Activated CD8-positive, alpha-beta memory T cell treated with anti-CD3 and anti-CD28 coated beads, Interleukin-2, amount 10 ng/mL, durations not matched to agents 7 days and 5 days (primary cell): ENCODE measurements at regions of chr12 and their contacts with region 1.

Region 1: DNA sequence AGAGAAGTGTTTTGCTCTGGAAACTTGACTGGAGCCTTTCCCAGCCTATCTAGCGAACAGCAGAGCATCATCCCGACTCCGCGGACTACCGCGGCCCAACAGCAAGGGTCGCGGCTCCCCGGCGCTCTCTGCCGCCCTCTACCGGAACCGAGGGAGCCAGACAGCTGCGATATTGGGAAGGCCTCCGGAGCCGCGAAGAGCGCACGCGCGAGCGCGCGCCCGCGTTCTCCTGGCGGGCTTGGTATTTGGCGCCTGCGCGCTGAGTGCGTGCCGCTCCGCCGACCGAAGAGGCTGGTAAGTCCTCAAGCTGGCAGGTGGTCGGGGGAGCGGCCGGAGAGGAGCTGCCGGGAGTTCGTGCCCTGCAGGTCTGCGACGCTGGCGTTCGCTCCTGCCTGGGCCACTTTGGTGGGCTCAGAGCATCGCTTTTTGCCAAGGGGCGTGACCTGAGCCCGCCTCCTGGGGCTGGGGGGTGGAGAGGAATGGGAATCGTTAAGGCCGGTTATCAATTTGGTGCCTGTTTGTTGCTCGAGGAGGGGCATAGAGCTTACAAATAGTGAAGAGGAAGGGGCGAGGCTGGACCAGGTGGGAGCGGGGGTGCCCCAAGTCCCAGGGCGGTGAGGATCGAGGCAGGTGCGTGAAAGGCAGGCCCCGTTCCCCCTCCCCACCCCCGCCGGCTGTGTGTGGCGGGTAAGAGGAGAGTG is at the start of gene TMEM106C:
- DNase-seq: peak; percentile 93
- ATAC-seq: peak; percentile 97
- H3K4me3 Mint-ChIP-seq: peak within 1 kb of the TSS; percentile 94
- H3K27ac Mint-ChIP-seq: peak within 1 kb of the TSS; percentile 83
- H3K4me1 Mint-ChIP-seq: peaks cover 33% of the 10 kb centered on the region
- H3K27me3 Mint-ChIP-seq: peaks cover 38% of the 10 kb centered on the region
- total RNA-seq, gene TMEM106C: 162 to 174 TPM

Region 2: DNA sequence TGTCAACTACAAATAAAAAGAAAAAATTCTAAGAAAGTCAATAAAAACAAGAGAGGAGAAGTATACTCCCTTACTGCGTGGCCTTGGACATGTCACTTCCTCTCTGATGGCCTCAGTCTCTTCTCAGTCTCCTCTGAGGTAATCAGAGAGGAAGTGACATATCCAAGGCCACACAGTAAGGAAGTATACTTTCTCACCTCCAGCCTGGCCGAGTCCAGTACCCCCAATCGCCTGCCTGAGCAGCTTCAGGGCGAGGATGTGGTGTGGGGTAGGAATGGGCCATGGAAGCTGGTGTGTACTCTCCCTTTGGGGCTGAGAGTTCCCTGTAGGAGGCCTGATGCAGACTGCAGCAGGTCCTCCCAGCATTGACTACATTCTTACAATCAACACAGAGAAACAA is 74.5 kb before region 1 on chr12:
- CTCF ChIA-PET with region 1: interaction called, 14 read pairs
- DNase-seq: peak; percentile 80
- ATAC-seq: peak; percentile 86
- H3K4me3 Mint-ChIP-seq: peak overlapping the region; percentile 76
- H3K27ac Mint-ChIP-seq: peak overlapping the region; percentile 97
- H3K4me1 Mint-ChIP-seq: peaks cover 91% of the 10 kb centered on the region
- H3K27me3 Mint-ChIP-seq: no peaks in the 10 kb centered on the region

Region 3: GRCh38 chr12:47910486-47910885 is 53.0 kb before region 1 on chr12:
- CTCF ChIA-PET with region 1: interaction called, 30 read pairs
- DNase-seq: no peak
- ATAC-seq: no peak
- H3K4me3 Mint-ChIP-seq: no peak overlapping the region
- H3K27ac Mint-ChIP-seq: no peak overlapping the region
- H3K4me1 Mint-ChIP-seq: peaks cover 2% of the 10 kb centered on the region
- H3K27me3 Mint-ChIP-seq: peaks cover 59% of the 10 kb centered on the region

Region 4: GRCh38 chr12:47977046-47977766 is 13.7 kb after region 1 on chr12:
- CTCF ChIA-PET with region 1: interaction called, 29 read pairs
- DNase-seq: no peak
- ATAC-seq: no peak
- H3K4me3 Mint-ChIP-seq: no peak overlapping the region
- H3K27ac Mint-ChIP-seq: no peak overlapping the region
- H3K4me1 Mint-ChIP-seq: no peaks in the 10 kb centered on the region
- H3K27me3 Mint-ChIP-seq: peaks cover 6% of the 10 kb centered on the region

Region 5: GRCh38 chr12:48157018-48157888 is 193.8 kb after region 1 on chr12 and contains the start of gene ASB8:
- CTCF ChIA-PET with region 1: interaction called, 13 read pairs
- DNase-seq: peak; percentile 100
- ATAC-seq: peak; percentile 98
- H3K4me3 Mint-ChIP-seq: peak within 1 kb of the TSS; percentile 95
- H3K27ac Mint-ChIP-seq: peak within 1 kb of the TSS; percentile 93
- H3K4me1 Mint-ChIP-seq: peaks cover 36% of the 10 kb centered on the region
- H3K27me3 Mint-ChIP-seq: no peaks in the 10 kb centered on the region
- total RNA-seq, gene ASB8: 40.2 to 43.1 TPM